Activated T-helper 1 cell treated with anti-CD3 and anti-CD28 coated beads, Interleukin-12 subunit alpha, Interleukin-12 subunit beta, Interleukin-2, Interleukin-4 antibody, amounts not matched to agents 30 ng/mL and 10 ng/mL and 1 ng/mL, durations not matched to agents 14 hours and 24 hours and 36 hours (primary cell): ENCODE measurements at regions of chr15 and their contacts with region 1.

Region 1: DNA sequence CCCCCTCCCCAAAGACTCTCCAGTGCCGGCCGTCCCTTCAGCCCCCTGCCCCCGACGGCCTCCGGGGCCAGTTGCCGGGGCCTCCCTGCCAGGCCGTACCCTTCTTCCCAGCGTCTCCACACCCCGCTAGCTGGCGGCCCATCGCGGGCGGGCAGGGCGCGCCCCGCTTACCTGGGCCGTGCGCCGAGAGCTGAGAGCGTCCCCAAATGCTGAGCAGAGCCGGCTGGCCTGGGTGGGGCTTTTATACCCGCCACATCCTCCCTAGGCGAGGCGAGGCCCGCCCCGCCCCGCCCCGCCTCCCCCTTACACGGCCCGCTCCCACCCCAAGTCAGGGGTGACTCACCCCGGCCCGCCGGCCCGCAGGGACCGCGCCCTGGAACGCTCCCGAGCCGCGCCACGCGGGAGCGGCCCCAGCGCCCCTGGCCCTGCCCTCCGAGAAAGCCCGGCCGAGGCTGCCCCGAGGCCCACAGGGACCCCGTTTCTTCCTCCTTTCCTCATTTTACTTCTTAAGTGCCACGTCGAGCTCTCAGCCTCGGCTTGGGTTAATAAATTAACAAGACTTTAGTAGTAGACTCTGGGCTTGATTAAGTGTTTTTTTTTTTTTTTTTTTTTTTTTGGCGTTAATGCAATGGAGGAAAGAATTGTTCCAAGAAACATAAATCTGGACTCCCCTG is at the start of gene ANXA2:
- DNase-seq: peak; percentile 80
- H3K4me3 Mint-ChIP-seq: peak within 1 kb of the TSS; percentile 97
- H3K27ac Mint-ChIP-seq: peak within 1 kb of the TSS; percentile 97
- H3K4me1 Mint-ChIP-seq: peaks cover 56% of the 10 kb centered on the region
- H3K27me3 Mint-ChIP-seq: no peaks in the 10 kb centered on the region
- total RNA-seq, gene ANXA2: 243 and 247 TPM in 2 replicates

Region 2: DNA sequence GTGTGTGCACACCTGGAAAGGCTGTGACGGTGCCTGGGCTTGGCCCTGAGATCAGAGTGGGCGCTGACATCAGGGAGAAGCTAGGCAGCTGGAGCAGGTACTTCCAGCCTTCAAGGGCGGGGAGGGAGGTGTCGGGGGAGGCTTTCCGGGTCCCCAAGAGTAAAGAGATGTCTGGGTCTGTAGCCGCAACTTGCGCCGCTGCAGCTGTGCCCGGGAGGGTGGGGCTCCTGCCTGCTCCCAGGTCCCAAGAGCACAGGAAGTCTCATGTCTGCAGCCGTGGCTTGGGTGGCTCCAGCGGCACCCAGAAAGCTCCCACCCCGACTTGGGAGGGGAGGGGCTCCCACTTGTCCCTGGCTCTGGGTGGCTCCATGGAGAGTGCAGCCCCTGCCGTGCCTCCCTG is 605.5 kb before region 1 on chr15:
- intact Hi-C with region 1: loop called (anchors 10 kb)
- DNase-seq: no peak
- H3K4me3 Mint-ChIP-seq: peak overlapping the region; percentile 54
- H3K27ac Mint-ChIP-seq: peak overlapping the region; percentile 30
- H3K4me1 Mint-ChIP-seq: peaks cover 29% of the 10 kb centered on the region
- H3K27me3 Mint-ChIP-seq: peaks cover 12% of the 10 kb centered on the region

Region 3: GRCh38 chr15:60128000-60128376 is 269.9 kb before region 1 on chr15:
- intact Hi-C with region 1: loop called (anchors 10 kb)
- DNase-seq: no peak
- H3K4me3 Mint-ChIP-seq: peak overlapping the region; percentile 82
- H3K27ac Mint-ChIP-seq: peak overlapping the region; percentile 80
- H3K4me1 Mint-ChIP-seq: peaks cover 57% of the 10 kb centered on the region
- H3K27me3 Mint-ChIP-seq: peaks cover 11% of the 10 kb centered on the region

Region 4: DNA sequence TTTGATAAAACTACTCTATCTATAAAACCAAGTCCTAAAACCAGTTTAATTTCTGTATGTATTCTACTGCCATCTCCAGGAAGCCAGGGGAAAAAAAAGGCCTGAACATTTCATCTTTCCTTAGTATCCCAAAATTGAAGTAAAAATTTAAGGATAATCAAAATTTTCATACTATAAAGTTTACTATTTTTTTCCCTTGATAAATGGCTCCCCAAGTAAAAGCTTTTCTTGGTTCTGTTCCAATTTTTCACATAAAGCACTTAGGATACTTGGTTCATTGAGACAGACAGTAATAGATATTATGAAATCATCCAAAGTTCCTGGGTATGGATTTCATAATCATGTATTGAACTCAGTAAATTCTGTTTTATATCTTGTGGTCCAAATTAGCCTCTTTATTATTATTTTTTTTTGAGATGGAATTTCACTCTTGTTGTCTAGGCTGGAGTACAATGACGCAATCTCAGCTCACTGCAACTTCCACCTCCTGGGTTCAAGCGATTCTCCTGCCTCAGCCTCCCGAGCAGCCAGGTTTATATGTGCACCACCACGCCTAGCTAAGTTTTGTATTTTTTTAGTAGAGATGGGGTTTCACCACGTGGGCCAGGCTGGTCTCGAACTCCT is 46.5 kb after region 1 on chr15:
- intact Hi-C with region 1: loop called (anchors 5 kb)
- DNase-seq: no peak
- H3K4me3 Mint-ChIP-seq: no peak overlapping the region
- H3K27ac Mint-ChIP-seq: no peak overlapping the region
- H3K4me1 Mint-ChIP-seq: no peaks in the 10 kb centered on the region
- H3K27me3 Mint-ChIP-seq: no peaks in the 10 kb centered on the region

Region 5: GRCh38 chr15:60478566-60479360 is 80.9 kb after region 1 on chr15 and contains the start of gene ICE2:
- intact Hi-C with region 1: loop called (anchors 1 kb)
- DNase-seq: peak; percentile 95
- H3K4me3 Mint-ChIP-seq: peak within 1 kb of the TSS; percentile 97
- H3K27ac Mint-ChIP-seq: peak within 1 kb of the TSS; percentile 97
- H3K4me1 Mint-ChIP-seq: peaks cover 52% of the 10 kb centered on the region
- H3K27me3 Mint-ChIP-seq: no peaks in the 10 kb centered on the region
- total RNA-seq, gene ICE2: 51.9 and 56.1 TPM in 2 replicates